CD8-positive, alpha-beta memory T cell (primary cell): ENCODE measurements at regions of chr3 and their contacts with region 1.

Region 1: DNA sequence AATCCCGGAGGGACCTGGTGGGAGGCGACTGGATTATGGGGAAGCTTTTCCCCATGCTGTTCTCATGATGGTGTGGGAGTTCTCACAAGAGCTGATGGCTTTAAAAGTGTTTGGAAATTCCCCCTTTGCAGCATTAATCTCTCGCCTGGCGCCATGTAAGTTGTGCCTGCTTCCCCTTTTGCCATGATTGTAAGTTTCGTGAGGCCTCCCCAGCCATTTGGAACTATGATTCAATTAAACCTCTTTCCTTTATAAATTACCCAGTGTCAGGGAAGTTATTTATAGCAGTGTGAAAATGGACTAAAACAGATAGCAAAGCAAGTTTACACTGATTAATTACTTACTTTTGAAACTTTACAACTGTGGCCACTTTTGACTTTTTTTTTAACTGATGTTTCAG is 10.6 kb upstream of the U2SURP start:
- DNase-seq: no peak
- H3K4me3 ChIP-seq: no peak overlapping the region
- H3K4me3 Mint-ChIP-seq: no peak overlapping the region
- H3K27ac ChIP-seq: no peak overlapping the region
- H3K27ac Mint-ChIP-seq: no peak overlapping the region
- H3K4me1 ChIP-seq: no peaks in the 10 kb centered on the region
- H3K4me1 Mint-ChIP-seq: peaks cover 0 to 5% (median 0%) of the 10 kb centered on the region in 3 donors
- H3K27me3 ChIP-seq: no peaks in the 10 kb centered on the region
- H3K27me3 Mint-ChIP-seq: peaks cover 6 to 52% of the 10 kb centered on the region in 2 donors

Region 2: DNA sequence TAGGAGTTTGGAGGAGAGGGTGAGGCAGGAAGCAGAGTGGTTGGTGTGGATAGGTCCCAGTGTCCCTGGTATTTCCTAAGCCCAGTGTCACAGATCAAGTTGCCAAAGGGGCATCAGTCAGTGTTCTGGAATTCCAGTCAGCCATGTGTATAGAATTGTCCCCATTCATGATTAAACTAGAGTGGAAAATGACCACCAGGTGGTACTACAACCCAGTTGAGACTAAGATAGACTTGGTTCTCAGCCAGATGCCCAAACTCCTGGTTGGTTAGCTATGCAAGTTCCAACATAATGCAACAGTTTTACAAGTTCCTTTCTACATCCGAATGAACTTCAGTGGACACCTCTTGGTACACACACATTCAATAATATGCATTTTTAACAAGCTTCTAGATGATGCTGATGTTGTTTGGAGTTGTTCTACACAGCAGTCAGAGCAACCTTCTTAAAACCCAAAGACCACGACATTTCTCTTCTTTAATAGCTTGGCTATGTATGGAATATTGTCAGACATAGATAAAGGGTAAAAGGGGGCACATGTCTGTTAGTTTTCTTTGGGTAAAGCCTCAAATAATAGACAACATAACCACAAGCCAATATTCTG is 403.8 kb before region 1 on chr3:
- CTCF ChIA-PET with region 1: interaction called, 11 read pairs
- POLR2A ChIA-PET with region 1: no interaction called
- DNase-seq: peak in 2 of 5 donors; percentile 25 to 43
- H3K4me3 ChIP-seq: no peak overlapping the region
- H3K4me3 Mint-ChIP-seq: no peak overlapping the region
- H3K27ac ChIP-seq: no peak overlapping the region
- H3K27ac Mint-ChIP-seq: no peak overlapping the region
- H3K4me1 ChIP-seq: no peaks in the 10 kb centered on the region
- H3K4me1 Mint-ChIP-seq: no peaks in the 10 kb centered on the region
- H3K27me3 ChIP-seq: no peaks in the 10 kb centered on the region
- H3K27me3 Mint-ChIP-seq: peaks cover 4 to 24% of the 10 kb centered on the region in 2 donors